BJ (cell line): ENCODE measurements at regions of chr10 and their contacts with region 1.

Region 1: GRCh38 chr10:102167861-102168260 is 15.7 kb downstream of the NOLC1 start:
- DNase-seq: no peak
- H3K4me3 ChIP-seq: no peak overlapping the region
- H3K27me3 ChIP-seq: no peaks in the 10 kb centered on the region
- CTCF ChIP-seq: no peak

Region 2: GRCh38 chr10:102185811-102186527 is 18.1 kb after region 1 on chr10:
- CTCF ChIA-PET with region 1: interaction called, 11 read pairs
- POLR2A ChIA-PET with region 1: no interaction called
- DNase-seq: no peak
- H3K4me3 ChIP-seq: no peak overlapping the region
- H3K27me3 ChIP-seq: peaks cover 6% of the 10 kb centered on the region
- CTCF ChIP-seq: no peak

Region 3: GRCh38 chr10:102399217-102400089 is 231.6 kb after region 1 on chr10:
- CTCF ChIA-PET with region 1: interaction called, 24 read pairs
- POLR2A ChIA-PET with region 1: no interaction called
- DNase-seq: no peak
- H3K4me3 ChIP-seq: peak overlapping the region; percentile 48
- H3K27me3 ChIP-seq: no peaks in the 10 kb centered on the region
- CTCF ChIP-seq: peak; percentile 86